Mammary epithelial cell (primary cell): ENCODE measurements at regions of chr22 and their contacts with region 1.

Region 1: DNA sequence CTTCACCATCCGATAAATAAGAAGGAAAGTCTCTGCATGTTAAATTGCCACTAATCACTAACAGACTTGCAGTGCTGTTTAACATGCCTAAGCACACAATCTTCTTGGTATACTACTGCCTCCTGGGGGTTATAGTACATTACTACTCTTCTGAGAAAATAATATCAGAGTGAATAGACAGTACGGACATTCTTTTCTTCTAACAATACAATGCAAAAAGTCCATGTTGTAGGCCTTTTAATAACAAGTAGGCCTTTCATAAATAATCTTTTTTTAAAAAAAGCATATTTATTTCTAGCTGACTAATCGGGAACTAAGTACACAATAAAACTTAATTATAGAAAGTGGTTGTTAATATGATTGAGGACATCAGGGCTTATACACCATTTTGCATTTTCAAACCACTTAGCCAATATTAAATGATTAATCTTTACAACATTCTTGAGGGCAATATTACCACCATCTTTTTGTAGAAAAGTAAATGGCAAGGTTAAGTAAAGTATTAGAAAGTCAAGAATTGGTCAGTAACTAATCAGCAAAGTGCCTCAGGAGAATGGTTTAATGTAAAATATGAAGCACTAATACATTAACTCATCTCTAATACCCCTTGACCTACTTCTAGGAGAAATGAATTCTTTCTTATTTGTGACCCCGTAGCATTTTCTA is 84.7 kb downstream of the TTC28 start:
- DNase-seq: peak; percentile 34
- H3K4me3 ChIP-seq: no peak overlapping the region
- H3K27ac ChIP-seq: no peak overlapping the region
- H3K4me1 ChIP-seq: no peaks in the 10 kb centered on the region
- H3K27me3 ChIP-seq: no peaks in the 10 kb centered on the region
- CTCF ChIP-seq: peak; percentile 67 to 75

Region 2: GRCh38 chr22:27880778-27881394 is 714.0 kb before region 1 on chr22:
- CTCF ChIA-PET with region 1: no interaction called
- dilution Hi-C with region 1: no loop called
- in situ Hi-C with region 1: no loop called
- intact Hi-C with region 1: loop called (anchors 10 kb)
- DNase-seq: peak; percentile 54
- H3K4me3 ChIP-seq: no peak overlapping the region
- H3K27ac ChIP-seq: no peak overlapping the region
- H3K4me1 ChIP-seq: peaks cover 24% of the 10 kb centered on the region
- H3K27me3 ChIP-seq: no peaks in the 10 kb centered on the region
- CTCF ChIP-seq: peak; percentile 68 to 73

Region 3: DNA sequence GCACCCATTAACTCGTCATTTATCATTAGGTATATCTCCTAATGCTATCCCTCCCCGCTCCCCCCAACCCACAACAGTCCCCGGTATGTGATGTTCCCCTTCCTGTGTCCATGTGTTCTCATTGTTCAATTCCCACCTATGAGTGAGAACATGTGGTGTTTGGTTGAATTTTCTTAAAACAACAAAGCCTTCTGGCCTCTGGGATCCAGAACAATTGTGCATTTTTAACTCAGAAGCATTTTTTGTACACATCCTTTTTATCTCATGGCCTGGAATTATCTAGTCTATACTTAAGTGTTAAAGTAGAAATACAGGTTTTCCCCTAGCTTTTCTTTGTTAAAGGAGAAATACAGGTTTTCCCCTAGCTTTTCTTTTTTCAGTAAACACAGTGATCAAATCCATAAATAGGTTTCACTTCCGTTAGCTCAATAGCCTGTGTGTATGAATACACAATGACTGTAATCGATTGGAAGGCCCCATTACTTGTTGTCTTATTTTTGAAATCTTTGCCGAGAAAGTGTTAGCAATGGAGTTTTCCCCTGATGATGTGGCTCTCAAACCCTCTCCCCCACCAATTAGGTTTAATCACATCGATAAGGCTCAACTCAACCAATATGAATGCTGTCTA is 550.3 kb before region 1 on chr22:
- CTCF ChIA-PET with region 1: no interaction called
- dilution Hi-C with region 1: no loop called
- in situ Hi-C with region 1: loop called in 1 of 2 experiments (anchors 5 kb)
- intact Hi-C with region 1: no loop called
- DNase-seq: no peak
- H3K4me3 ChIP-seq: no peak overlapping the region
- H3K27ac ChIP-seq: no peak overlapping the region
- H3K4me1 ChIP-seq: no peaks in the 10 kb centered on the region
- H3K27me3 ChIP-seq: no peaks in the 10 kb centered on the region
- CTCF ChIP-seq: no peak

Region 4: GRCh38 chr22:28075358-28075981 is 519.5 kb before region 1 on chr22:
- CTCF ChIA-PET with region 1: no interaction called
- dilution Hi-C with region 1: loop called (anchors 5 kb)
- in situ Hi-C with region 1: no loop called
- intact Hi-C with region 1: no loop called
- DNase-seq: peak; percentile 52
- H3K4me3 ChIP-seq: no peak overlapping the region
- H3K27ac ChIP-seq: no peak overlapping the region
- H3K4me1 ChIP-seq: no peaks in the 10 kb centered on the region
- H3K27me3 ChIP-seq: no peaks in the 10 kb centered on the region
- CTCF ChIP-seq: no peak

Region 5: GRCh38 chr22:28424427-28425080 is 170.4 kb before region 1 on chr22:
- CTCF ChIA-PET with region 1: no interaction called
- dilution Hi-C with region 1: no loop called
- in situ Hi-C with region 1: no loop called
- intact Hi-C with region 1: no loop called
- DNase-seq: no peak
- H3K4me3 ChIP-seq: no peak overlapping the region
- H3K27ac ChIP-seq: no peak overlapping the region
- H3K4me1 ChIP-seq: no peaks in the 10 kb centered on the region
- H3K27me3 ChIP-seq: no peaks in the 10 kb centered on the region
- CTCF ChIP-seq: no peak

Region 6: DNA sequence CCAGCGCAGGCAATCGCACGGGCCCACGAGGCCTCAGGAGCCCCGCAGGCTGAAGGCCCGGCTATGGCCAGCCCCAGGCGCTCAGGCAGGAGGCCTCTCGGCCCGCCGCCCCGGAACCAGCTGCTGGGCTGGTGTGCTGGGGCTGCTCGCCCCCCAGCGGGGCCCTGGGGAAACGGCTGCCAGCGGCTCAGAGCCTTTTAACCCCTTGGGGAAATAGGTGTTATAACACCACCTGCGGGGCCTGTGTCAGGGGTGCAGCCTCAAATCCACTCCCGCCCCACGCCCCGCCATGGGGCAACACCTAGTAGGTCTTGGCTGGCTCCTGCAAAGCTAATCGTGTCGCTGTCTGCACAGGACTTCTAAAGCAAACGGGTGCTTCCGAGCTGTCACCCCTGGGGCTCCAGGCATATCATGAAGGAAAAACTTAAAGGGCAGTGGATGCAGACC is 152.6 kb before region 1 on chr22:
- CTCF ChIA-PET with region 1: no interaction called
- dilution Hi-C with region 1: no loop called
- in situ Hi-C with region 1: no loop called
- intact Hi-C with region 1: loop called (anchors 1 kb)
- DNase-seq: peak; percentile 75
- H3K4me3 ChIP-seq: peak overlapping the region; percentile 40 to 51 (median 47)
- H3K27ac ChIP-seq: no peak overlapping the region
- H3K4me1 ChIP-seq: peaks cover 9% of the 10 kb centered on the region
- H3K27me3 ChIP-seq: peaks cover 3% of the 10 kb centered on the region
- CTCF ChIP-seq: peak; percentile 30 to 82

Region 7: GRCh38 chr22:28514321-28514821 is 80.6 kb before region 1 on chr22:
- CTCF ChIA-PET with region 1: no interaction called
- dilution Hi-C with region 1: no loop called
- in situ Hi-C with region 1: no loop called
- intact Hi-C with region 1: no loop called
- DNase-seq: no peak
- H3K4me3 ChIP-seq: no peak overlapping the region
- H3K27ac ChIP-seq: no peak overlapping the region
- H3K4me1 ChIP-seq: no peaks in the 10 kb centered on the region
- H3K27me3 ChIP-seq: no peaks in the 10 kb centered on the region
- CTCF ChIP-seq: no peak